ENCODE measurements at regions of chr1 and their contacts with region 1.

Region 1: DNA sequence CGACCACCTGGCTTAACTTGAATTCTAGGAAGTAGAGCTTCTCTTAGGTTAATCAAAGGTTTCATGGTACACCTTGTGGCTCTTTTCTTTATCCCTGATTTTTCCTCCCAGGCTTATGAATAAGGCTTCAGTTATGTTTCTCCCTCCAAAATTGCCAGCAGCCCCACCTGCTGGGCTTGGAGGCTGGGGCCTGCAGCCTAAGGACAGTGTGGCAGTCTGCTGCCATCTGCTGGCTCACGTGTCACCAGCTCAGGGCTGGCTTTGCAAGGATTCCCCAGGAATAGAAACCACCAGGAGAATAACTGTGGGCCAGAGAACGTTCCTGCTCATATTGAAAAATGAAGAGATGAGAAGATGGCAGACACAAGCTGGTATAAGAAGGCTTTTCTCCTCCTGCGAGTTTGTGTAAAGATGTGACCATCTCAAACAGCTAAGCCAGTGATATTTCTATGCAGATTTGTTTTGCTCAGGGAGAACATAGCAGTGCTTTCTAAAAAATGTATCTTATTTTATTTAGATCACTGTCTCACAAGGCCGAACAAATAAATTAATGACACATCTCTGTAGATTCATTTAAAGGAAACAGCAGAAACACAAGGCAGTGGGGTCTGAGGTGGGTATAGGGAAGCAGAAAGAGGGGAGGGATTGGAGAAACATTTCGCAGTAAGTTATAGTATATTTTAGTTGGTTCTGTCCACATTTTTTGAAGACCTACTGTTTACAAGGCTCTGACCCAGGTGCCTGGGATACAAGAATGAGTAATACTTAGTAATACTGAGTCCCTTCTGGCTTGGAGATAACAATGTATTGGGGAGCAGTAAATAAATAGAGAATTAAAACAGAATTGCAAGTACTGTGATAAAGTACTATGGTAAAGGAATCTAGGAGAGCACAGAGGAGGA is 291.1 kb upstream of the SGIP1 start:
- DNase-seq: peak; percentile 93
- H3K4me3 ChIP-seq: no peak overlapping the region
- H3K27ac ChIP-seq: peak overlapping the region; percentile 57
- H3K4me1 ChIP-seq: peaks cover 51% of the 10 kb centered on the region
- H3K27me3 ChIP-seq: no peaks in the 10 kb centered on the region

Region 2: DNA sequence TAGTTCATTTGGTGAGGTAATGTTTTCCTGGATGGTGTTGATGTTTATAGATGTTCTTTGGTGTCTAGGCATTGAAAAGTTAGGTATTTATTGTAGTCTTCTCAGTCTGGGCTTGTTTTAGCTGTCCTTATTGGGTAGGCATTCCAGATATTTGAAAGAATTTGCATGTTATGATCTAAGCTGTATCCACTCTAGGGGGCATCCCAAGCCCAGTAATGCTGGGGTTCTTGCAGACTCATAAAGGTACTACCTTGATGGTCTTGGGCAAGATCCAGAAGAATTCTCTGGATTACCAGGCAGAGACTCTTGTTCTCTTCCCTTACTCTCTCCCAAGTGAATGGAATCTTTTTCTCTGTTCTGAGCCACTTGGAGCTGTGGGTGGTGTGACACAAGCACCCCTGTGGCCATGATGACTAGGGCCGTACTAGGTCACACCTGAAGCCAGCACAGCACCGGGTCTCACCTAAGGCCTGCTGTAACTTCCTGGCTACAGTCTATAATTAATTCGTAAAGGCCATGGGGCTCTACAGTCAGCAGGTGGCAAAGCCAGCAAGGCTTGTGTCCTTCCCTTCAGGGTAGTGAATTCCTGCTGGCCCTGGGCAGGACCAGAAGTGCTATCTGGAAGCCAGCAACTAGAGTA is 525.0 kb before region 1 on chr1:
- in situ Hi-C with region 1: loop called (anchors 10 kb)
- DNase-seq: peak; percentile 44
- H3K4me3 ChIP-seq: no peak overlapping the region
- H3K27ac ChIP-seq: no peak overlapping the region
- H3K4me1 ChIP-seq: no peaks in the 10 kb centered on the region
- H3K27me3 ChIP-seq: no peaks in the 10 kb centered on the region

Region 3: GRCh38 chr1:66478116-66478515 is 235.2 kb after region 1 on chr1:
- in situ Hi-C with region 1: no loop called
- DNase-seq: peak; percentile 91
- H3K4me3 ChIP-seq: no peak overlapping the region
- H3K27ac ChIP-seq: peak overlapping the region; percentile 76
- H3K4me1 ChIP-seq: peaks cover 26% of the 10 kb centered on the region
- H3K27me3 ChIP-seq: no peaks in the 10 kb centered on the region

Region 4: GRCh38 chr1:66552829-66553228 is 309.9 kb after region 1 on chr1:
- in situ Hi-C with region 1: no loop called
- DNase-seq: no peak
- H3K4me3 ChIP-seq: no peak overlapping the region
- H3K27ac ChIP-seq: no peak overlapping the region
- H3K4me1 ChIP-seq: peaks cover 19% of the 10 kb centered on the region
- H3K27me3 ChIP-seq: no peaks in the 10 kb centered on the region

Region 5: GRCh38 chr1:66890621-66891020 is 647.7 kb after region 1 on chr1:
- in situ Hi-C with region 1: no loop called
- DNase-seq: peak; percentile 15
- H3K4me3 ChIP-seq: no peak overlapping the region
- H3K27ac ChIP-seq: no peak overlapping the region
- H3K4me1 ChIP-seq: no peaks in the 10 kb centered on the region
- H3K27me3 ChIP-seq: no peaks in the 10 kb centered on the region

Measured in GM23248 (cell line).